Naive thymus-derived CD4-positive, alpha-beta T cell (primary cell): ENCODE measurements at regions of chr13 and their contacts with region 1.

Region 1: DNA sequence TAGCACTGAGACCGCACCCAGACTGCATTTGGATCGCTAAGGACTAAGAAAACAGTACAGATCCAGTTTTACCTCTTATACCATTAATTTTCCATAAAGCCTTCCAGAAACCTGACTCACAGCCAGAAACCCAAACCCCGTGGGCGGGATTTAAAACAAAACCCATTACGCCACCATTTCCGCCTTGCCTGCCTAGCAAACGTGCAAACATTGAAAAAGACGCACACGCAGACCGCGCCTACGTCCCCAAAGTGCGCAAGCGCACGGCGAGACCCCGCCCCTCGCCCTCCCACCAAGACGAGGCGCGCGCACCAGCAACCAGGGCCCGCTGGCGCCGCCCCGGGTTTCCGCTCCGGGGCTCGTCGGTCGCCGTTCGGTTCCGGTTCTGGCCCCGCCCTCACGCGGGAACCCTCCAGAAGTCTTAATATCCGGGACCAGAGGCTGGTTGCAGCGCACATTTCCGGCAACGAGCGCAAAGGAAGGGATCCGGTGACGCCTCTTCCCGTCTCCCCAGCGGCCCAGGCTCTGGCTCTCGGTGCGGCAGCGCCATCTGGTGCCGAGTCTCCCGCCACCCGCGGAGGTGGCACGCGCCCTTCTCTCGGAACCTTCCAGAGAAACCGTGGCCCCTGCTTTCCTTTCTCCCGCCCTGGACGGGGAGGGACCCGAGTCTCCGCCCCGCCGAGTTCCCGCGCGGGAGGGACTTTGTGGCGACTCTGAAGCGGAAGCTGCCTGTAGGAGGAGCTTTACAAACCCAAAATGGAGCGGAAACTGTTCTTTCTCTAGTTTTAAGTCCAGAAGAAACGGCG is 256.9 kb upstream of the STARD13 start:
- DNase-seq: peak; percentile 98 to 100 (median 99)
- ATAC-seq: peak; percentile 89
- H3K4me3 ChIP-seq: peak overlapping the region; percentile 85
- H3K4me3 Mint-ChIP-seq: peak overlapping the region; percentile 86 to 98 (median 95)
- H3K27ac ChIP-seq: peak overlapping the region; percentile 99
- H3K27ac Mint-ChIP-seq: peak overlapping the region; percentile 98 to 100 (median 100)
- H3K4me1 ChIP-seq: peaks cover 27 to 35% of the 10 kb centered on the region in 2 donors
- H3K4me1 Mint-ChIP-seq: peaks cover 24 to 64% (median 49%) of the 10 kb centered on the region in 7 donors
- H3K27me3 ChIP-seq: no peaks in the 10 kb centered on the region
- H3K27me3 Mint-ChIP-seq: no peaks in the 10 kb centered on the region

Region 2: GRCh38 chr13:31846182-31846950 is 1696.1 kb before region 1 on chr13:
- CTCF ChIA-PET with region 1: no interaction called
- POLR2A ChIA-PET with region 1: no interaction called
- intact Hi-C with region 1: loop called in 1 of 2 experiments (anchors 2 kb)
- DNase-seq: peak in 7 of 9 donors; percentile 1 to 86 (median 14)
- ATAC-seq: peak; percentile 96
- H3K4me3 ChIP-seq: no peak overlapping the region
- H3K4me3 Mint-ChIP-seq: peak overlapping the region; percentile 47 to 91 (median 74)
- H3K27ac ChIP-seq: no peak overlapping the region
- H3K27ac Mint-ChIP-seq: peak overlapping the region in 1 of 9 donors; percentile 43
- H3K4me1 ChIP-seq: no peaks in the 10 kb centered on the region
- H3K4me1 Mint-ChIP-seq: peaks cover 0 to 19% (median 11%) of the 10 kb centered on the region in 7 donors
- H3K27me3 ChIP-seq: peaks cover 0 to 6% of the 10 kb centered on the region in 2 donors
- H3K27me3 Mint-ChIP-seq: peaks cover 23 to 75% (median 64%) of the 10 kb centered on the region in 5 donors

Region 3: GRCh38 chr13:32381539-32381938 is 1160.9 kb before region 1 on chr13:
- CTCF ChIA-PET with region 1: no interaction called
- POLR2A ChIA-PET with region 1: no interaction called
- intact Hi-C with region 1: loop called in 1 of 2 experiments (anchors 1 kb)
- DNase-seq: peak in 6 of 9 donors; percentile 5 to 41 (median 24)
- ATAC-seq: peak; percentile 73
- H3K4me3 ChIP-seq: no peak overlapping the region
- H3K4me3 Mint-ChIP-seq: no peak overlapping the region
- H3K27ac ChIP-seq: no peak overlapping the region
- H3K27ac Mint-ChIP-seq: no peak overlapping the region
- H3K4me1 ChIP-seq: no peaks in the 10 kb centered on the region
- H3K4me1 Mint-ChIP-seq: peaks cover 0 to under 1% (median 0%) of the 10 kb centered on the region in 7 donors
- H3K27me3 ChIP-seq: no peaks in the 10 kb centered on the region
- H3K27me3 Mint-ChIP-seq: no peaks in the 10 kb centered on the region

Region 4: DNA sequence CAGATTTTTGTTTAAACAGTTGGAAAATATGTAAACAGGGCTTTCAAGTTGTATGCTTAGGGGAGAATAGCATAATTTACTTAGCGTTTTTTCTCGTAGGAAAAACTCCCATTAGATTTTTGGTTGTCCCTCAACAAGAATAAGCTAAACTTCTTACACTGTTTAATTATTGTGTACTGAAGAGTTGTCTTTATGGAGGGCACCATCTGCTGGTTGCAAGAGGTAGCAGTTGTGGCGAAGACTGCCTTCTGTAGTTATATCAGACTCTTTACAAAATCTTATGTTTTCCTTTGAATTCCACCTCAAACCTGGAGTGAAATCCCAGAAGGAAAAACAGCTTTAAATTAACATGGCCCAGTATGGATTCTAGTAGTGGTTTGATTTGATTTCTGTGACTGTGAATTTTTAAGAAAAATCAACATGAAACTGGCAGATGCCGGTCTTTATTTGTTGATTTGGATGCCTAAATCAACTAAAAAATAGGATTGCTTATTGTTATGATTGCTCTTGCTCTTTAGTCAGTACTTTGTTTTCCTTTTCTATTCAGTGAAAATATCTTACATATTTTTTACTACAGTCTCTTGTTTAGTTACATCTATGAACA is 902.9 kb before region 1 on chr13:
- CTCF ChIA-PET with region 1: no interaction called
- POLR2A ChIA-PET with region 1: no interaction called
- intact Hi-C with region 1: loop called (anchors 1 to 2 kb)
- DNase-seq: peak in 7 of 9 donors; percentile 40 to 60 (median 53)
- ATAC-seq: peak; percentile 95
- H3K4me3 ChIP-seq: no peak overlapping the region
- H3K4me3 Mint-ChIP-seq: no peak overlapping the region
- H3K27ac ChIP-seq: no peak overlapping the region
- H3K27ac Mint-ChIP-seq: no peak overlapping the region
- H3K4me1 ChIP-seq: peaks cover 0 to 12% of the 10 kb centered on the region in 2 donors
- H3K4me1 Mint-ChIP-seq: peaks cover 11 to 43% (median 32%) of the 10 kb centered on the region in 7 donors
- H3K27me3 ChIP-seq: no peaks in the 10 kb centered on the region
- H3K27me3 Mint-ChIP-seq: no peaks in the 10 kb centered on the region

Region 5: GRCh38 chr13:32905063-32905863 is 637.2 kb before region 1 on chr13:
- CTCF ChIA-PET with region 1: no interaction called
- POLR2A ChIA-PET with region 1: no interaction called
- intact Hi-C with region 1: loop called in 1 of 2 experiments (anchors 5 kb)
- DNase-seq: peak in 1 of 9 donors; percentile 32
- ATAC-seq: no peak
- H3K4me3 ChIP-seq: no peak overlapping the region
- H3K4me3 Mint-ChIP-seq: peak overlapping the region in 1 of 10 donors; percentile 79
- H3K27ac ChIP-seq: no peak overlapping the region
- H3K27ac Mint-ChIP-seq: peak overlapping the region in 2 of 9 donors; percentile 6 to 89
- H3K4me1 ChIP-seq: no peaks in the 10 kb centered on the region
- H3K4me1 Mint-ChIP-seq: peaks cover 0 to 53% (median 14%) of the 10 kb centered on the region in 7 donors
- H3K27me3 ChIP-seq: no peaks in the 10 kb centered on the region
- H3K27me3 Mint-ChIP-seq: peaks cover 0 to 4% (median 0%) of the 10 kb centered on the region in 5 donors

Region 6: GRCh38 chr13:33228648-33229445 is 313.6 kb before region 1 on chr13:
- CTCF ChIA-PET with region 1: interaction called, 6 read pairs
- POLR2A ChIA-PET with region 1: interaction called, 4 read pairs
- intact Hi-C with region 1: loop called (anchors 1 kb)
- DNase-seq: peak in 7 of 9 donors; percentile 4 to 49 (median 37)
- ATAC-seq: peak; percentile 75
- H3K4me3 ChIP-seq: no peak overlapping the region
- H3K4me3 Mint-ChIP-seq: no peak overlapping the region
- H3K27ac ChIP-seq: no peak overlapping the region
- H3K27ac Mint-ChIP-seq: peak overlapping the region in 1 of 9 donors; percentile 73
- H3K4me1 ChIP-seq: peaks cover 0 to 4% of the 10 kb centered on the region in 2 donors
- H3K4me1 Mint-ChIP-seq: peaks cover 0 to 8% (median 6%) of the 10 kb centered on the region in 7 donors
- H3K27me3 ChIP-seq: no peaks in the 10 kb centered on the region
- H3K27me3 Mint-ChIP-seq: peaks cover 0 to 5% (median 4%) of the 10 kb centered on the region in 5 donors

Region 7: GRCh38 chr13:33367926-33368325 is 174.6 kb before region 1 on chr13:
- CTCF ChIA-PET with region 1: no interaction called
- POLR2A ChIA-PET with region 1: no interaction called
- intact Hi-C with region 1: no loop called
- DNase-seq: no peak
- ATAC-seq: peak; percentile 61
- H3K4me3 ChIP-seq: no peak overlapping the region
- H3K4me3 Mint-ChIP-seq: no peak overlapping the region
- H3K27ac ChIP-seq: no peak overlapping the region
- H3K27ac Mint-ChIP-seq: no peak overlapping the region
- H3K4me1 ChIP-seq: no peaks in the 10 kb centered on the region
- H3K4me1 Mint-ChIP-seq: peaks cover 6 to 8% (median 7%) of the 10 kb centered on the region in 7 donors
- H3K27me3 ChIP-seq: no peaks in the 10 kb centered on the region
- H3K27me3 Mint-ChIP-seq: peaks cover 0 to 10% (median 7%) of the 10 kb centered on the region in 5 donors

Region 8: GRCh38 chr13:33471204-33471603 is 71.3 kb before region 1 on chr13:
- CTCF ChIA-PET with region 1: no interaction called
- POLR2A ChIA-PET with region 1: no interaction called
- intact Hi-C with region 1: no loop called
- DNase-seq: no peak
- ATAC-seq: no peak
- H3K4me3 ChIP-seq: no peak overlapping the region
- H3K4me3 Mint-ChIP-seq: no peak overlapping the region
- H3K27ac ChIP-seq: no peak overlapping the region
- H3K27ac Mint-ChIP-seq: no peak overlapping the region
- H3K4me1 ChIP-seq: no peaks in the 10 kb centered on the region
- H3K4me1 Mint-ChIP-seq: peaks cover 0 to 2% (median 0%) of the 10 kb centered on the region in 7 donors
- H3K27me3 ChIP-seq: no peaks in the 10 kb centered on the region
- H3K27me3 Mint-ChIP-seq: peaks cover 0 to 10% (median 6%) of the 10 kb centered on the region in 5 donors

Region 9: DNA sequence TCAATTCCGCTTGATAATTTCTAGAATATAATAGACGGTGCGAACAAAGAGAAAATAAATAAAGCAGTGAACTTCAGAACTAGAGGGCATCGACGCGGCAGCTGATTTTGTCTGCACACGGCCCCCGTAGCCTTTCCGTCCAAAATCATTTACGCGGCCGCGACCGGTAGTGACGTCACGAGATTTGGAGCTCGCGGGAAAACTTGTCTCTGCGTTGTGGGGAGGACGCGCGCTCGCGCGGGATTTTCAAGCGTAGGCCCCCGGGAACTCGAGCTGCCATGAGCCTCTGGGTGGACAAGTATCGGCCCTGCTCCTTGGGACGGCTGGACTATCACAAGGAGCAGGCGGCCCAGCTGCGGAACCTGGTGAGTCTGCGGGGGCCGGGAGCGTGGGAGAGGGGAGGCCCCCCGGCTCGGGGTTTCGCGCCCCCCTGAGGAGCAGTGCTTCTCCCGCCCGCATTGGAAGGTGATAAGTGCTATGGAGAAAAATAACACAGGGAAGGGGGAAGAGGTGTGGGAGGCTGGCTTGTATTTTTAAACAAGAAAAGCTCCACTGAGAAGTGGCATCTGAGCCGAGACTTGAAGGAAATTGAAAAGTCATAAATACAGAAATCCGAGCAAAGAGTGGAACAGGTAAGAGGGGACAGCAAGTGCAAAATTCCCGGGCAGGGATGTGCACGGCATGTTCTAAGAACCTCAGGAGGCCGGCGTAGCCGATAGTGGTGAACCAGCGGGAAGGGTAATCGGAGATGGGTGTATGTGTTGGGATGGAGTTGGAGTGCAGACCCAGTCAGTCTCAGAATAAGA is 275.6 kb after region 1 on chr13 and contains the start of gene RFC3:
- CTCF ChIA-PET with region 1: interaction called, 3 read pairs
- POLR2A ChIA-PET with region 1: interaction called, 6 read pairs
- intact Hi-C with region 1: loop called (anchors 1 kb)
- DNase-seq: peak; percentile 78 to 89 (median 87)
- ATAC-seq: peak; percentile 95
- H3K4me3 ChIP-seq: peak within 1 kb of the TSS; percentile 84
- H3K4me3 Mint-ChIP-seq: peak within 1 kb of the TSS; percentile 86 to 100 (median 96)
- H3K27ac ChIP-seq: peak within 1 kb of the TSS; percentile 70
- H3K27ac Mint-ChIP-seq: peak within 1 kb of the TSS; percentile 89 to 98 (median 95)
- H3K4me1 ChIP-seq: peaks cover 0 to 8% of the 10 kb centered on the region in 2 donors
- H3K4me1 Mint-ChIP-seq: peaks cover 14 to 44% (median 25%) of the 10 kb centered on the region in 7 donors
- H3K27me3 ChIP-seq: no peaks in the 10 kb centered on the region
- H3K27me3 Mint-ChIP-seq: peaks cover 0 to 7% (median 0%) of the 10 kb centered on the region in 5 donors
- total RNA-seq, gene RFC3: 4.5 to 29.9 (median 7.1) TPM